ENCODE measurements at regions of chrX and their contacts with region 1.

Region 1: GRCh38 chrX:22192417-22193060 is 80.2 kb upstream of the CBLL2 start:
- DNase-seq: peak; percentile 75
- H3K4me3 Mint-ChIP-seq: no peak overlapping the region
- H3K27ac Mint-ChIP-seq: no peak overlapping the region
- H3K4me1 Mint-ChIP-seq: peaks cover 6% of the 10 kb centered on the region
- H3K27me3 Mint-ChIP-seq: peaks cover 60% of the 10 kb centered on the region
- CTCF ChIP-seq: peak; percentile 76

Region 2: GRCh38 chrX:22237479-22237878 is 44.9 kb after region 1 on chrX:
- CTCF ChIA-PET with region 1: no interaction called
- POLR2A ChIA-PET with region 1: no interaction called
- intact Hi-C with region 1: no loop called
- DNase-seq: no peak
- H3K4me3 Mint-ChIP-seq: no peak overlapping the region
- H3K27ac Mint-ChIP-seq: no peak overlapping the region
- H3K4me1 Mint-ChIP-seq: no peaks in the 10 kb centered on the region
- H3K27me3 Mint-ChIP-seq: peaks cover 78% of the 10 kb centered on the region
- CTCF ChIP-seq: no peak

Region 3: GRCh38 chrX:22585831-22586230 is 393.3 kb after region 1 on chrX:
- CTCF ChIA-PET with region 1: no interaction called
- POLR2A ChIA-PET with region 1: no interaction called
- intact Hi-C with region 1: loop called (anchors 10 kb)
- DNase-seq: no peak
- H3K4me3 Mint-ChIP-seq: no peak overlapping the region
- H3K27ac Mint-ChIP-seq: no peak overlapping the region
- H3K4me1 Mint-ChIP-seq: no peaks in the 10 kb centered on the region
- H3K27me3 Mint-ChIP-seq: peaks cover 68% of the 10 kb centered on the region
- CTCF ChIP-seq: no peak

Measured in MCF 10A (cell line).